Transverse colon (tissue), 4 donors: ENCODE measurements at regions of chr11 and their contacts with region 1.

Region 1: DNA sequence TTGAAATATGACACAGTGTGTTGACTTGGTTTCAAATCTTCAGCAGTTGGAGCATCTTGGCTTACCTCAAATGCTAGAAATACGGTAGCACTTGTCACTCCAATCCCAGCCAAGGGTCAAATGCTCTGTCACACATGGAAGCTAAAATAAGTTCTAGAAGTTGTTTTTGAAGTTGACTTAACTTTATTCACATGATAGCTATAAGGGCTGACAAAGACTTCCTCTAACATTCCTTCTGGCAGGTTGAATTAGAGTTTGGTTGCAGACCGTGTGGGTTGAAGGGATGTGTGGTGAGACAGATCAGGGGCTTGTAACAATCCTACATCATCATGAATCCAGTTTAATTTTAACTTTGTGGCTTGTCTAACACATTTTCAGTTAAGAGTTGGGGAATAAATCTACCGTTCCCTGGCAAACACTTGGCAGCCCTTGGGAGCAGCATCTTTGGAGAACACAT is 4.6 kb downstream of the SLN start:
- DNase-seq: no peak
- H3K4me3 ChIP-seq: no peak overlapping the region
- H3K27ac ChIP-seq: no peak overlapping the region
- H3K4me1 ChIP-seq: no peaks in the 10 kb centered on the region
- H3K27me3 ChIP-seq: peaks cover 5% of the 10 kb centered on the region
- CTCF ChIP-seq: no peak
- EP300 ChIP-seq: no peak
- POLR2A ChIP-seq: no peak

Region 2: DNA sequence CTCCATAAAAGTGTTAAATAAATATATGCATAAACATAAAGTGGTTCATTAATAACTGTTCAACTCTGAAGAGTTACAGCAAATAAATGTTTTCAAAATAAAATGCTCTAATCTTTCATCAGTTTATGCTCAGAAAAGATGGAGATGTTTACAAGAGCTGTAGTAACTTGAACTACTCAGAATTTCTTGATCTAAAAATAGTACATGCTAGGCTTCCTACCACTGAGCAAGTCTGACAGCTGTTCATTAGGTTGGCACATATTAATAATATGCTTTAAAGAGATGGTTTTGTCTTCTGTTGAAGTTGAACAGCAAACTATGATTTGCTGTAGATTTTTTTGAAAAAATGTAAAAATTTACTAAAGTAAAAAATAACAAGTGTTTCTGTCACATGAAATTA is 15.4 kb after region 1 on chr11:
- in situ Hi-C with region 1: no loop called
- intact Hi-C with region 1: loop called (anchors 1 kb)
- DNase-seq: no peak
- H3K4me3 ChIP-seq: no peak overlapping the region
- H3K27ac ChIP-seq: no peak overlapping the region
- H3K4me1 ChIP-seq: no peaks in the 10 kb centered on the region
- H3K27me3 ChIP-seq: peaks cover 5% of the 10 kb centered on the region
- CTCF ChIP-seq: no peak
- EP300 ChIP-seq: no peak
- POLR2A ChIP-seq: no peak